ENCODE measurements at regions of chr10 and their contacts with region 1.

Region 1: DNA sequence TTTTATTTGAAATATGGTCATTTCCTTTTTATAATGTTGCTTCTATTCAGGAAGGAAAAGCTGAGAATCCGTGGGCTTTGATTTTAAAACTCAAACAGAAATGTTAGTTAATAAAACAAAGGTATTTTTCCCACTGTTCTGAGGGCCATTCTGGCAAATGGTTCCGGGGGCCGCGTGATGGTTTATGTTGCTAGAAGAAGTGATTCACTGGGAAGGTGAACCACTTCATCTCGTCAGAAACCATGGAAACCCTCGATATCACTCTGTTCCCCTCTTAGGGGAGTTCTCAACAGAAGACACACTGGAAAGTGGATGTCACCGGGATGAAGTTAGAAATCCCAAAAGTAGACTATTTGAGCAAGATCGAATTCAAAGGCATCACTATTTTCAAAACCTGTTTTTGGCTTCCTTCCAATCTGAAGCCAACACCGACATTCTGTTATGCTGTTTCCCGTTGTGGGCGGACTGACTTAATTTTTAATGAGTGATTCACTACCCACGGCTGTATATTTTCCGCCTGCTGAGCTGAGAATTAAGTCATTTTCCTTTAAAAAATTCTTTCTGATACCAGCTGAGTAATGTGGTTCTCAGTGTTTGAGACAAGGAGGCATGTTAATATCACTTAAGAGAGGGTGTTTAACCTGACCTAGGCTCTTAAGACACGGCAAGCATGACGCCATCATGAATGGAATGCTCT is 84.1 kb downstream of the PTPRE start:
- DNase-seq: no peak
- H3K4me3 Mint-ChIP-seq: peak overlapping the region; percentile 58
- H3K27ac Mint-ChIP-seq: peak overlapping the region; percentile 91
- H3K4me1 Mint-ChIP-seq: peaks cover 32% of the 10 kb centered on the region
- H3K27me3 Mint-ChIP-seq: peaks cover 2% of the 10 kb centered on the region

Region 2: GRCh38 chr10:127906548-127907377 is 84.2 kb before region 1 on chr10 and contains the start of gene PTPRE:
- intact Hi-C with region 1: loop called (anchors 5 kb)
- DNase-seq: peak; percentile 48
- H3K4me3 Mint-ChIP-seq: no peak within 1 kb of the TSS
- H3K27ac Mint-ChIP-seq: no peak within 1 kb of the TSS
- H3K4me1 Mint-ChIP-seq: no peaks in the 10 kb centered on the region
- H3K27me3 Mint-ChIP-seq: peaks cover 40% of the 10 kb centered on the region
- total RNA-seq, gene PTPRE: 16.8 and 17.0 TPM in 2 replicates

Region 3: DNA sequence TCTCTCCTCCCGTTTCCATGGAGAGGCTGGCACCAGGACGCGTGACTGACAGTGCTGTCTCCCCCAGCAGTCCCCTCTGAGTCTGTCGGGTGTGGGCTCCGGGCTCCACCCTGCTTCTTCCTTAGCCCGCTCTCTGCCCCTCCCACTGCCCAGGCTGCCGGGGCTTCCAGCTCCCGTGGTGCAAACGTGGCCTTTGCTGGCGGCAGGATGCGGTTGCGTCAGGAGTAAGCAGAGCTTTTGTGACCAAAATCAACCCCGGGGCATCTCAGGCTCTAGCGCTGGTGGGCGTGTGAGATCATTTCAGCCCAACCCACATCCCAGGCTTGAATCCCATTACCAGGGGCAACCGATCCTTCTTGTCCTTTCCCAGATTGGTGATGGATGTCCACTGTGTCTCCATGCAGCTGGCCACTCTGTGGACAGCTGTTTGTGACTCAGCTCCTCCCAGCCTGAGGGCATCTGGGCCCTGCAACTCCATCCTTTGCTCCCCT is 55.9 kb before region 1 on chr10:
- intact Hi-C with region 1: no loop called
- DNase-seq: no peak
- H3K4me3 Mint-ChIP-seq: no peak overlapping the region
- H3K27ac Mint-ChIP-seq: no peak overlapping the region
- H3K4me1 Mint-ChIP-seq: no peaks in the 10 kb centered on the region
- H3K27me3 Mint-ChIP-seq: peaks cover 3% of the 10 kb centered on the region

Region 4: DNA sequence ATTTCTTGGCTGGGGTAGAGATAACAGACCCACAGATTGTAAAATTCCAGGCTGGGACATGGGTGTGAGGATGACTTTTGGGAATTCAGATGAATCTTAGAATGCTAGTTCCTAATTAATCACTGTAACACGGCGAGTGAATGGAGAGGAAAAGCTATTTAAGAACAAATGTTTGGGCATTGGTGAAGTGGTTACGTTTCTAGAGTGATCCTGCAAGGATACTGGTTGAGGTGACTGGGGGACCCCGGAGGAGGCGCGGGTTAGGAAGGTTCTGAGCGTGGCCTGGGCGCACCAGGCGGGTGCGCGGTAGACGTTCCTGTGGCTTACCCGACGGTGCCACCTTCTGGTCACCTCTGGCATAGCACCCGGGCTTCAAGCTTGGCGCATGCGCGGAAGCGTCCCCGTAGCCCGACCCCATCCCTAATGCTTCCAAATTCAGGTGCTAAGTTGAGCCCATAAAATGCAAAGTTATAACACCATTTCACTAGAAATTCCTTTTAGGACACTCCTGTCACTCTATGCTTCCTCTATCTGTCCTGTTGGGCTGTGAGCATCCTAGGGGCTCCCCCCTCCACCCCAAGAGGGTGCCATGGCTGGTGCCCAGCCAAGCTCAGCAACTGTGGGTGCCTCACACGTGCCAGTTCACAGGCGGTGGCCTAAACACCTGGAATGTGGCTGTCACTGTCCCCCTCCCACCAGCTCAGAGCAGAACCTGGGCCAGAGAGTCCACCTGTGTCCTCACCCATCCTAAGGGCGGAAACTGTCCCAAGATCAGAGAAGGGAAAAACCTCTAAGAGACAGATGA is 20.4 kb after region 1 on chr10:
- intact Hi-C with region 1: loop called (anchors 1 kb)
- DNase-seq: peak; percentile 77
- H3K4me3 Mint-ChIP-seq: peak overlapping the region; percentile 17
- H3K27ac Mint-ChIP-seq: no peak overlapping the region
- H3K4me1 Mint-ChIP-seq: peaks cover 8% of the 10 kb centered on the region
- H3K27me3 Mint-ChIP-seq: peaks cover 7% of the 10 kb centered on the region

Region 5: GRCh38 chr10:128047351-128047750 is 56.4 kb after region 1 on chr10:
- intact Hi-C with region 1: loop called (anchors 2 kb)
- DNase-seq: peak; percentile 83
- H3K4me3 Mint-ChIP-seq: peak overlapping the region; percentile 82
- H3K27ac Mint-ChIP-seq: peak overlapping the region; percentile 88
- H3K4me1 Mint-ChIP-seq: peaks cover 43% of the 10 kb centered on the region
- H3K27me3 Mint-ChIP-seq: no peaks in the 10 kb centered on the region

Region 6: DNA sequence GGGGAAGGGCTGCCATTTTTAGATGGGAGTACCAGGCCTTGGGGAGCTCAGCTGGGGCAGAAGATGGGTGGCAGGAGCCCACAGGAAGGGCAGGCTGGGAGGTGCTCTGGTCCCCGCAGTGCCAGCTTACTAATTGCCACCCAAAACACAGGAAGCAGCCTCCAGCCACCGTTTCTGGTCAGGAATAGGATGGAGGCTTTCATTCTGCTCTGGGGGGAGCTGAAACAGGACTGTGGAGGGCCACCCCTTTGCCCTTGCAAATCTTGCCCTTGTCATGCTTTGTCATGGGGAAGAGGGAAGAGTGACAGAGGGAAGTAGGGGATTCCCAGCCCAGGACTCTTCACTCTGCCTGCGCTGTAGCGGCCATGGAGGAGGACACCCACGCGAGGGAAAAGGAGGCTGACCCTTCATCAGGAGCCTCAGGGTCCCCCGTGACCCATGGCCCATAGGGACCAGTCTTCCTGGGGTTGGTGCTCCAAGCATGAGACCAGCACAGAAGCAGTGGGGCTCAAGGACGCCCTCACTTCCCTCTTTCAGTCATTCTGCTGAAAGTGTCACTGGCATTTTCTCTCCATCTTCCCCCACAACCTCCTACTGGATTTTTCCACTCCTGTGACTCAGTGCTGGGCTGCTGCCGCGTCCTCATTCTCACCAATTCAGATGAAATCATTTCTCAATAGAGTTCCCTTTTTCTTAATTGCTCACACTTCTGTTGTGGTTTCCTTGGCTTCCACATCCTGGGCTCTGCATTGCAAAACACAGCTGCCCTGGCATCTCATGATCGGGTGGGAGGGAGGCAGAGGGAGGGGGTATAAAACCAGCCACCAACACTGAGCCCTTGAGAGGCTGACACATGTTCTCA is 73.3 kb after region 1 on chr10:
- intact Hi-C with region 1: loop called (anchors 1 kb)
- DNase-seq: peak; percentile 51
- H3K4me3 Mint-ChIP-seq: peak overlapping the region; percentile 68
- H3K27ac Mint-ChIP-seq: peak overlapping the region; percentile 93
- H3K4me1 Mint-ChIP-seq: peaks cover 60% of the 10 kb centered on the region
- H3K27me3 Mint-ChIP-seq: no peaks in the 10 kb centered on the region

Region 7: GRCh38 chr10:128125944-128126764 is 135.2 kb after region 1 on chr10 and contains the start of gene MKI67:
- intact Hi-C with region 1: loop called (anchors 5 kb)
- DNase-seq: peak; percentile 89
- H3K4me3 Mint-ChIP-seq: peak within 1 kb of the TSS; percentile 97
- H3K27ac Mint-ChIP-seq: peak within 1 kb of the TSS; percentile 91
- H3K4me1 Mint-ChIP-seq: peaks cover 39% of the 10 kb centered on the region
- H3K27me3 Mint-ChIP-seq: peaks cover 4% of the 10 kb centered on the region
- total RNA-seq, gene MKI67: 163 and 165 TPM in 2 replicates

Region 8: GRCh38 chr10:128254476-128254875 is 263.5 kb after region 1 on chr10:
- intact Hi-C with region 1: no loop called
- DNase-seq: no peak
- H3K4me3 Mint-ChIP-seq: no peak overlapping the region
- H3K27ac Mint-ChIP-seq: no peak overlapping the region
- H3K4me1 Mint-ChIP-seq: no peaks in the 10 kb centered on the region
- H3K27me3 Mint-ChIP-seq: peaks cover 5% of the 10 kb centered on the region

Region 9: DNA sequence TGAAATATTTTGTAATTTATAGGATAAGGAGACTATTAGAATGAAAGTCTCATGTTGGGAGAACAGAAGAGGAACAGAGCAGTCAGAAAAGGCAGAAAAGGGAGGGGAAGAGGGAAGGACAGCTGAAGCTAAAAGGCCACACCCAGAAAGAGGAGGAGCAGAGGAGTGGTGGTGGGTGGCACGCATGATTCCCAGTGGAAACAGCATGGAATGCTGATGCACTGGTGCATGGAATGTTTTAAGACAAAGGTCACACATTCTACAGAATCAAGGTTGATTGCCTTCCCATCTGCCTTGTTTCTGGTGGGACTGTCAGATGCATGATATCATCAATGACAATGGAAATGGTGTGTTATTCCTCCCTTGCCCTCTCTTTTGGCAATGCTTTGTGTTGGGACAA is 420.6 kb after region 1 on chr10:
- intact Hi-C with region 1: no loop called
- DNase-seq: no peak
- H3K4me3 Mint-ChIP-seq: no peak overlapping the region
- H3K27ac Mint-ChIP-seq: no peak overlapping the region
- H3K4me1 Mint-ChIP-seq: no peaks in the 10 kb centered on the region
- H3K27me3 Mint-ChIP-seq: no peaks in the 10 kb centered on the region

Measured in activated T-helper 2 cell treated with anti-CD3 and anti-CD28 coated beads, Interferon-gamma antibody, Interleukin-2, Interleukin-4, amounts not matched to agents 10 μg/mL and 5 μg/mL and 100 μg/mL, durations not matched to agents 14 hours and 24 hours and 36 hours (primary cell).